T-cell (primary cell): ENCODE measurements at regions of chr16 and their contacts with region 1.

Region 1: DNA sequence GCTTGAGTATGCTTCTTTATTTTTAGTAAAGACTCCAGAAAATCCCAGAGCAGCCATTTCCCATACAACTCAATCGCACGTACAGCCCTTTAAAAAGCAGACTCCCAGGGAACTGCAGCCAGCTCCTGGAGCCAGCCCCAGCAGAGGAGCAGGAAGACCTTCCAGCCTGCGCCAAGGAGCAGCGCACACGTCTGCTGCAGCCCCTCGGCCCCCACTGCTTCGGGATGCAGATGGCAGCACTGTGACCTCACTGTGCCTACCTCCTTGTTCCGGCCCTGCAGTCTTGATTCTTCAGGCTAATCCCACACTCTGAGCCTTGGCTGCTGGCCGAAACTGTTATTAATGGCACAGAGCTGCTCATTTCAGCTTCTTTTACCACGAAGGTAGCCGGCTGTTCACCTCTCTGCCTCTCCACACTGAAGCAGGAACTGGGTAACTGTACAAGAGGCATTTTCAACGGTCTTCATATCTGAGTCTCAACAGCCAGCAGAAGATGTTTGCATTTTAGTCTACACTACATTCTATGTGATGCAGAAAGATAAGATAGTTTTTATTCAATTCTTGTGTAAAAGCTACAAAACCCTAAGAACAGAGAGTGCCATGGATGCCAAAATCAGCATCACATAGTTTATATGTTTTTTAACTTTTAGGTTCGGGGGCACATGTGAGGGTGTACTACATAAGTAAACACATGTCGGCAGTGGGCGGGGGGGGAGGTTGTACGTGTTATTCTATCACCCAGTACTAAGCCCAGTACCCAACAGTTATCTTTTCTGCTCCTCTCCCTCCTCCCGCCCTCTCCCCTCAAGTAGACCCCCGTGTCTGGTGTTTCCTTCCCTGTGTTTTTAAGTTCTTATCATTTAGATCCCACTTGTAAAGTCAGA is 130.9 kb downstream of the ANKRD11 start:
- DNase-seq: no peak
- ATAC-seq: no peak
- H3K4me3 ChIP-seq: peak overlapping the region in 1 of 2 donors; percentile 40
- H3K4me3 Mint-ChIP-seq: peak overlapping the region; percentile 59 to 77 (median 64)
- H3K27ac ChIP-seq: peak overlapping the region; percentile 56
- H3K27ac Mint-ChIP-seq: peak overlapping the region; percentile 80 to 85
- H3K4me1 ChIP-seq: peaks cover 71 to 90% of the 10 kb centered on the region in 2 experiments
- H3K4me1 Mint-ChIP-seq: peaks cover 93 to 94% (median 94%) of the 10 kb centered on the region in 3 donors
- H3K27me3 ChIP-seq: no peaks in the 10 kb centered on the region
- H3K27me3 Mint-ChIP-seq: no peaks in the 10 kb centered on the region

Region 2: DNA sequence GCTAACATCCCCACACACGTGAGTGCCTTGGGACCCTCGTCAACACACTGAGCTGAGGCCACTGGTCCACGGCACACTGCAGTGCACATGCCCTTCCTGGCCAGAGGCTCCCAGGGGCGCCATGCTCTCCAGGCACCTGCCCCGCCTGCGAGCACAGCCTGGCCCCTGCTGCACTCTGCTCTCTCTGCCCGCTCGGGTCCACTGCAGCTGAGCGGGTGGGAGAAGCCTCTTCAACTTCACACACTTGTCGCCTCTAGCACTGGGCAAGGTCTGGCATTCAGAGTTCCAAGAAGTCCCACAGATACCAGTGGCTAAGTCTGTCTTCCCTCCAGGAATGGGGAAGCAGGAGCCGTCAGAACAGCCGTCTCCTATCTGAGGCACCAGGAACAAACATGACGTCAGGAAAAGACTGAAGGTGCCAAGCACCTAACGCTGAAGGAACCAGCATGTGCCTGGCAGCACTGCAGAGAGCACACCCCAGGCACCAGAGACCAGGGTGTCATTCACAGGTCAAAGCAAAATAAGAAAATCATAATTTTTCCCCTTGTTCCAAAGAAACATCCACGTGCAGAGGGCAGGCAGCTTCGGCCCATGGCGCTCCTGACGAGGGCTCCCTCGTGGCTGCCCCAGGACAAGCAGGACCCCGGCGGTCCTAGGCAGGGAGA is 59.1 kb before region 1 on chr16:
- CTCF ChIA-PET with region 1: no interaction called
- POLR2A ChIA-PET with region 1: no interaction called
- DNase-seq: no peak
- ATAC-seq: no peak
- H3K4me3 ChIP-seq: no peak overlapping the region
- H3K4me3 Mint-ChIP-seq: no peak overlapping the region
- H3K27ac ChIP-seq: no peak overlapping the region
- H3K27ac Mint-ChIP-seq: peak overlapping the region in 1 of 2 donors; percentile 22
- H3K4me1 ChIP-seq: peaks cover 13 to 79% of the 10 kb centered on the region in 2 experiments
- H3K4me1 Mint-ChIP-seq: peaks cover 60 to 62% (median 61%) of the 10 kb centered on the region in 3 donors
- H3K27me3 ChIP-seq: no peaks in the 10 kb centered on the region
- H3K27me3 Mint-ChIP-seq: no peaks in the 10 kb centered on the region

Region 3: GRCh38 chr16:89343501-89344457 is 15.7 kb before region 1 on chr16:
- CTCF ChIA-PET with region 1: no interaction called
- POLR2A ChIA-PET with region 1: no interaction called
- DNase-seq: no peak
- ATAC-seq: no peak
- H3K4me3 ChIP-seq: no peak overlapping the region
- H3K4me3 Mint-ChIP-seq: no peak overlapping the region
- H3K27ac ChIP-seq: no peak overlapping the region
- H3K27ac Mint-ChIP-seq: no peak overlapping the region
- H3K4me1 ChIP-seq: peaks cover 2 to 62% of the 10 kb centered on the region in 2 experiments
- H3K4me1 Mint-ChIP-seq: peaks cover 84 to 91% (median 85%) of the 10 kb centered on the region in 3 donors
- H3K27me3 ChIP-seq: no peaks in the 10 kb centered on the region
- H3K27me3 Mint-ChIP-seq: no peaks in the 10 kb centered on the region

Region 4: GRCh38 chr16:89504091-89504490 is 144.6 kb after region 1 on chr16:
- CTCF ChIA-PET with region 1: no interaction called
- POLR2A ChIA-PET with region 1: interaction called in 1 of 2 experiments, 12 read pairs
- DNase-seq: no peak
- ATAC-seq: no peak
- H3K4me3 ChIP-seq: no peak overlapping the region
- H3K4me3 Mint-ChIP-seq: no peak overlapping the region
- H3K27ac ChIP-seq: no peak overlapping the region
- H3K27ac Mint-ChIP-seq: no peak overlapping the region
- H3K4me1 ChIP-seq: peaks cover 22 to 35% of the 10 kb centered on the region in 2 experiments
- H3K4me1 Mint-ChIP-seq: peaks cover 22 to 27% (median 27%) of the 10 kb centered on the region in 3 donors
- H3K27me3 ChIP-seq: no peaks in the 10 kb centered on the region
- H3K27me3 Mint-ChIP-seq: no peaks in the 10 kb centered on the region

Region 5: DNA sequence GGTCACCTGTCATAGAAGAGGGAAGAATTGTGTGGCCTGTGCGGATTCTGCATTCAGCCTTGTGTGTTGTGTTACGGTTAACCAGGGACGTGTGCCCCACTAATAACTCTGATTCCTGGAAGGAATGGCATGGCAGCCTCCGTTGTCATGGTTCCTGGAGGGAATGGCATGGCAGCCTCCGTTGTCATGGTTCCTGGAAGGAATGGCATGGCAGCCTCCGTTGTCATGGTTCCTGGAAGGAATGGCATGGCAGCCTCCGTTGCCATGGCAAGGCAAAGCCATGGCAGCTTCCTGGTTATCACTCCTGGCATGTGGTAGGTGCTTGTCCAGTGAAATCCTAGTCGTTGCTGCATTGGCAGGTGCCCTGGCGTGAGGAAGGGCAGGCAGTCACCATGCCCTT is 157.6 kb after region 1 on chr16:
- CTCF ChIA-PET with region 1: no interaction called
- POLR2A ChIA-PET with region 1: no interaction called
- DNase-seq: no peak
- ATAC-seq: no peak
- H3K4me3 ChIP-seq: no peak overlapping the region
- H3K4me3 Mint-ChIP-seq: no peak overlapping the region
- H3K27ac ChIP-seq: no peak overlapping the region
- H3K27ac Mint-ChIP-seq: no peak overlapping the region
- H3K4me1 ChIP-seq: no peaks in the 10 kb centered on the region
- H3K4me1 Mint-ChIP-seq: peaks cover 1 to 10% (median 7%) of the 10 kb centered on the region in 3 donors
- H3K27me3 ChIP-seq: no peaks in the 10 kb centered on the region
- H3K27me3 Mint-ChIP-seq: no peaks in the 10 kb centered on the region